WTC11 (cell line): ENCODE measurements at regions of chr5 and their contacts with region 1.

Region 1: DNA sequence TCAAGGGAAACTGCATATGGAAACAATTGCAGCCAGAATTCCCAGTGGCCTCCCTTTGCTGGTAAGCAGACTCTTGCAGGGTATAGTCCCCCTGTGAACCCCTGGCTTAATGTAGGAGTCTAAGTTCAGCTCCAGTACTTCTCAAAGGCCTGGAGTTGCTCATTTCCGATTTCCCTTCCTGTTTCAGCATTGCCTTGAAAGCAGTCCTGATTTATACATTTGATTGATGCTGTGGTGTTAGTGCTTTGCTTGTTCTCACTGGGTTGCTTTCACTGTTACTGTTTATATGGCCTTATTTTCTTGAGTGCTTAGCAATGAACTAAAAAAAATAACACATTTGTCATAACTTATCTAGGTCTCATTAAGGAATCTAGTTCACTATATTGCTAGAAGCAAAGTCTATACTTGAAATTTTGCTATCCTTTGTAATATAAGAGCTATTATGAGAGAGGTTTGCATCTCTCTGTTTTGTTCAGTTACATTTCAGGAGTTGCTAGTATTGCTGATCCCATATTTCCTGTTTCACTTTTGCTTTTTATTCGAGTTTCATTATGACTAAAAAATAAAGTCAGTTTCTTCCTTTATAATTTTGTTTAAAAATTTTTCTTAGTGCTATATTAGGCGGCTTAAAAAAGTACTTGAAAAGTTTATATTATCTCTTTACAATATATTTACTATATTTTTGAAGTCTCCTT is 122.4 kb upstream of the NMUR2 start:
- DNase-seq: no peak
- ATAC-seq: no peak
- H3K4me3 Mint-ChIP-seq: no peak overlapping the region
- H3K27ac Mint-ChIP-seq: no peak overlapping the region
- H3K4me1 Mint-ChIP-seq: peaks cover 31% of the 10 kb centered on the region
- H3K27me3 Mint-ChIP-seq: no peaks in the 10 kb centered on the region; the same call in 1 of the 2 replicates
- CTCF ChIP-seq: no peak

Region 2: DNA sequence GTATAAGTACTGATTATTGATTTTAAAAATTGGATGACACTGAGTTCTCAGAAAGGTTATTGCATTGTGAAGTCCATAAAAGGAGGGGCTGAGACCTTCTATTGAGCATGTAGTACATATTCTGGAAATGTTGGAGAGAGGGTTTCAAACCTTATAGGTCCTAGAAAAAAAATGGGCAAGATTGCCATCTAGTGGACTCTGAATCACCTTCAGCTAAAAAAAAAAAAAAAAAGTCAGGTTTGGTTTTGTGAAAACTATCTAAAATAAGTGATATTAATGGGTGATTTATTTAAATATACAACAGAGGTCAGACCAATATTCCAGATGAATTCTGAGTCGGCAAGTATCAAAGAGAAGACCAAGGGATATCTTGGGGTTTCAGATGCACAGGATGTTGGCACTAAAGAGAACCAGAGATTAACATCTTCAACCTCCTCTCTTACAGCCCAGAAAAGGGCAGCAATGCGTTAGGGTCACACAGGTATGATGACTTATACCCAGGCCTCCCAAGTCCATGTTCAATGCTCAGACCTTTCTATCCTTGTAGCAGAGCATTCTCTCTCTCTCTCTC is 12.6 kb before region 1 on chr5:
- CTCF ChIA-PET with region 1: interaction called, 11 read pairs
- POLR2A ChIA-PET with region 1: no interaction called
- DNase-seq: no peak
- ATAC-seq: peak; percentile 39; the same call in 1 of the 2 replicates
- H3K4me3 Mint-ChIP-seq: no peak overlapping the region
- H3K27ac Mint-ChIP-seq: no peak overlapping the region
- H3K4me1 Mint-ChIP-seq: peaks cover 10% of the 10 kb centered on the region
- H3K27me3 Mint-ChIP-seq: peaks cover 10% of the 10 kb centered on the region
- CTCF ChIP-seq: no peak